ENCODE measurements at regions of chr12 and their contacts with region 1.

Region 1: DNA sequence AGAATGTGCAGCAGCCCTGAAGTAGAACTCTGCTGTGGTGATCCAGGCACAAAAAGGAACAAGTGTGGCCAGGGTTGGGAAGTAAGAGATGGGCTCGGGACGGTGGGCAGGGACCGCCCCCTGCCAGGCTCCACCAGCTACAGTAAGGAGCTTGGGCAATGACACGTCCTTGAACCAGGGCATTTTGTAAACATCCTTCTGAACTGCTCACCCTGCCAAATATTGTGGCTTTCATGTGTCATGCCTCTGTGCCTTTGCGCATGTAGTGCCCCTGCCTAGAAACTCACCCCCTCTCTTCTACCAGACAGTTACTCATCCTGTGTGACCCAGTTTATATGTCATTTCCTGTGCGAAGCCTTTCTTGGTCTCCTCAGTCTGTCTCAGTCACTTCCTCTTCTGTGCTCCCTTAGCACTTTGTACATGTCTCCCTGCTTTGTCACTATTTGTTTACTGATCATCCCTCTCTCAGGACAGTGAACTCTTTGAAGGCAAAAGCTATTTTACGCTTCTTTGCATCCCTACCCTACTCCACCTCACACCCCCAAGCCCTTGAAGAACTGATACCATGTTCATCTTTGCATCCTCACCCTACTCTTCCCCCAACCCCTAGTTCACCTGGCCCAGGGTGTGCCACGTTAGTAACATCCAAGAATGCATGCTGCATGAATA is 108.9 kb upstream of the PLEKHG7 start:
- DNase-seq: peak; percentile 75
- CTCF ChIP-seq: no peak

Region 2: GRCh38 chr12:91382081-91382543 is 1211.8 kb before region 1 on chr12:
- in situ Hi-C with region 1: loop called (anchors 25 kb)
- DNase-seq: peak; percentile 16
- CTCF ChIP-seq: peak; percentile 65

Region 3: GRCh38 chr12:91577586-91578539 is 1016.0 kb before region 1 on chr12:
- in situ Hi-C with region 1: loop called (anchors 25 kb)
- DNase-seq: peak; percentile 37
- CTCF ChIP-seq: peak; percentile 24

Region 4: GRCh38 chr12:91811481-91812287 is 782.2 kb before region 1 on chr12:
- in situ Hi-C with region 1: loop called (anchors 25 kb)
- DNase-seq: peak; percentile 26
- CTCF ChIP-seq: peak; percentile 54